Endothelial cell of umbilical vein (primary cell): ENCODE measurements at regions of chr19 and their contacts with region 1.

Region 1: GRCh38 chr19:10388957-10389356 is 8.6 kb upstream of the TYK2 start:
- DNase-seq: peak; percentile 85
- H3K4me3 ChIP-seq: no peak overlapping the region
- H3K27ac ChIP-seq: no peak overlapping the region
- H3K4me1 ChIP-seq: no peaks in the 10 kb centered on the region
- H3K27me3 ChIP-seq: no peaks in the 10 kb centered on the region
- CTCF ChIP-seq: peak; percentile 88 to 93
- POLR2A ChIP-seq: peak; percentile 43

Region 2: GRCh38 chr19:10292206-10292788 is 96.7 kb before region 1 on chr19:
- CTCF ChIA-PET with region 1: interaction called, 15 read pairs
- POLR2A ChIA-PET with region 1: no interaction called
- dilution Hi-C with region 1: no loop called
- intact Hi-C with region 1: no loop called
- DNase-seq: peak; percentile 48
- H3K4me3 ChIP-seq: no peak overlapping the region
- H3K27ac ChIP-seq: no peak overlapping the region
- H3K4me1 ChIP-seq: peaks cover 25% of the 10 kb centered on the region
- H3K27me3 ChIP-seq: peaks cover 54 to 71% of the 10 kb centered on the region in 2 experiments
- CTCF ChIP-seq: no peak
- POLR2A ChIP-seq: no peak

Region 3: GRCh38 chr19:10305139-10305806 is 83.7 kb before region 1 on chr19:
- CTCF ChIA-PET with region 1: interaction called, 13 read pairs
- POLR2A ChIA-PET with region 1: no interaction called
- dilution Hi-C with region 1: no loop called
- intact Hi-C with region 1: no loop called
- DNase-seq: no peak
- H3K4me3 ChIP-seq: no peak overlapping the region
- H3K27ac ChIP-seq: no peak overlapping the region
- H3K4me1 ChIP-seq: no peaks in the 10 kb centered on the region
- H3K27me3 ChIP-seq: no peaks in the 10 kb centered on the region
- CTCF ChIP-seq: no peak
- POLR2A ChIP-seq: no peak

Region 4: DNA sequence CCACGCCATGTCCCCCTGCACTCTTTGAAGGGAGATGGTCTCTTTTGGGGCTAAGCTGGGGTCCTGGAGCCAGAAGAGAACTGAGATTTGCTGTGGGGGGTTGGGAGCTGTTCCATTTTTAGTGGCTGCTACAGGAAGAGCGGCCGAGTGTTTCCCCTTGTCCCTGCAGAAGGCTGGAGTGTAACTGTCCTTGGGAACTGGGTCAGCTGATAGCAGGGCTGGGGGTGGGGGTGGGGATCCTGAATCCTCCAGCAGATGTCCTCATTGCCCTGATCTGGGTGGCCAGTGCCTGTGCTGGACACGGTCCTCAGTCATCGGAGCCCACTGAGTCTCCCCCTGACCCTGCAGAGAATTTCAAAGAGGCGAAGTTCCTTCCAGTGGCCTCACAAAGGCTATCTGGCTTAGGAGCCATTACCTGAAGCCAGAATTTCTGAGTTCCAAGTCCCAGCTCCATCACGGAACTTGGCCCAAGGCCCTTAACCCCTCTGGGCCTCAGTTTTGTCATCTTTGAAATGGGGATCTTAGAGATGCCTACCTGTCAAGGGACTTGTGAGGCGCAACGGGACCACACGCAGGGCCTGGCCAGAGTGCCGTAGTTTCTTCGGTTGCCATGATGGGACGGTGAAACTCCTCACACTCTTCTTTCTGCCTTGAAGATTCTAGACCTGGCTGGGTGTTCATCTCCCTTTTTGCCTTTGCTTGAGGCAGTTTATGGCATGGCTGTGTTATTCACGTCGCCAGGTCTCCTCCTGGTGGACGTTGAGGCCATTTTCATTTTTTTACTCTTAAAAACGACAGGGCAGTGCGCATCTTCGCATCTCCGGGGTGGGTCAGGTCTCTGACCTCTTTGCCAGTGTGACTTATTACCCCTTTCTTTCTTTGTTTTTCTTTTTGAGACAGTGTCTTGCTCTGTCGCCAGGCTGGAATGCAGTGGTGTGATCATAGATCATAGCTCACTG is 380.9 kb after region 1 on chr19:
- CTCF ChIA-PET with region 1: no interaction called
- POLR2A ChIA-PET with region 1: no interaction called
- dilution Hi-C with region 1: no loop called
- intact Hi-C with region 1: no loop called
- DNase-seq: peak; percentile 53
- H3K4me3 ChIP-seq: no peak overlapping the region
- H3K27ac ChIP-seq: no peak overlapping the region
- H3K4me1 ChIP-seq: peaks cover 3% of the 10 kb centered on the region
- H3K27me3 ChIP-seq: no peaks in the 10 kb centered on the region
- CTCF ChIP-seq: peak in 1 of 2 donors; percentile 42
- POLR2A ChIP-seq: no peak